A549 (cell line): ENCODE measurements at regions of chr17 and their contacts with region 1.

Region 1: GRCh38 chr17:75914643-75915267 is 10.1 kb upstream of the MRPL38 start:
- DNase-seq: no peak
- ATAC-seq: peak; percentile 35 to 41; a peak in 5 of 6 replicates
- H3K4me3 ChIP-seq: no peak overlapping the region
- H3K27ac ChIP-seq: no peak overlapping the region
- H3K4me1 ChIP-seq: no peaks in the 10 kb centered on the region
- CTCF ChIP-seq: no peak
- EP300 ChIP-seq: no peak
- POLR2A ChIP-seq: no peak
- RAD21 ChIP-seq: no peak

Region 2: GRCh38 chr17:75927286-75927922 is 12.6 kb after region 1 on chr17:
- CTCF ChIA-PET with region 1: interaction called, 37 read pairs
- POLR2A ChIA-PET with region 1: no interaction called
- DNase-seq: peak; percentile 62 to 80
- ATAC-seq: peak; percentile 62 to 88; a peak in 5 of 6 replicates
- H3K4me3 ChIP-seq: no peak overlapping the region
- H3K27ac ChIP-seq: no peak overlapping the region
- H3K4me1 ChIP-seq: no peaks in the 10 kb centered on the region
- CTCF ChIP-seq: peak; percentile 32
- EP300 ChIP-seq: no peak
- POLR2A ChIP-seq: no peak
- RAD21 ChIP-seq: peak in 1 of 2 experiments; percentile 31; a peak in 2 of 5 replicates